Motor neuron (in vitro differentiated cells): ENCODE measurements at regions of chr1 and their contacts with region 1.

Region 1: GRCh38 chr1:174999216-174999925 is 376 bp upstream of the CACYBP start:
- ATAC-seq: peak; percentile 81 to 89 (median 84)
- H3K4me3 ChIP-seq: peak overlapping the region; percentile 58 to 78 (median 69)
- H3K27ac ChIP-seq: peak overlapping the region; percentile 99 to 100
- H3K4me1 ChIP-seq: peaks cover 10 to 17% of the 10 kb centered on the region in 2 donors

Region 2: DNA sequence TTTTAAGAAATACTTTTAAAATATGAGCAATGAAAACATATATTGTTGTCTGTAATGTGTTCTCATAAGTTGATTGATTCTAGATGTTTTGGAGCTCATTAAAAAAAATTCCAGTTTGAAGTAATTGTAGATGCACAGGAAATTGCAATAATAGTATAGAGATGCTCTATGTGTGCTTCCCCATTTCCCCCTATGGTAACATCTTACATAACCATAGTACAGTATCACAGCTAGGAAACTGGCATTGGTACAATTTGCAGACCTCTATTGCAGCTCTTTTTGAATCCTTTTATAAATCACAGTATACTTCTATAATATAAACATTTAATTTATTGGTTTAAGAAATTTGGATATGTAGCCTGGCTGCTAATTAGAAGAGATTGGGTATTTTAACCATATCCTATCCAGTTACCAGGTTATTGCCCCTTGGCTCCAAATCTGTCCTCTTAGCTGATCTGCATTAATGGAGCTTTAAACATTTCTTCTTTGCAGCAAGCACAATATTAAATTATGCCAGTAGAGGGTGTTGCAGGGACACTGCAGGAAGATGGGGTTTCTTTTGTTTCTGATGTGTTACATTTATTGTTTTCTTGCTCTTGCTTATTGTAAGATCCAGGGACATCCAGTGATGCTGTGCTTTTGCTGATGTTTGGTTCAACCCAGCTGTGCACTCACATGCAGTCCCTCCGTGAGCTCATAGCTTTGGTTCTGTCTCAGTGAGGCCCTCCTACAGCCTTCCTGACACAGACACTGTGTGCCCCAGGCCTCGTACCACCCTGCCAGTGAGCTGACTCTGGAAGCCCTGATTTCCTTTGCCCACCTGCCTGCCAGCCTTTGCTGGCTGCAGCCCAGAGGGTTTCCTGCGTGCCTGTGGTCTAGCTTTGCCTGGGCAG is 736.8 kb before region 1 on chr1:
- in situ Hi-C with region 1: loop called in 1 of 9 experiments (anchors 25 kb)
- ATAC-seq: peak; percentile 71 to 90 (median 76)
- H3K4me3 ChIP-seq: no peak overlapping the region
- H3K27ac ChIP-seq: no peak overlapping the region
- H3K4me1 ChIP-seq: peaks cover 0 to 2% of the 10 kb centered on the region in 2 donors

Region 3: GRCh38 chr1:174769961-174770549 is 229.3 kb before region 1 on chr1:
- in situ Hi-C with region 1: loop called in 7 of 9 experiments (anchors 25 kb)
- ATAC-seq: peak in 4 of 8 experiments; percentile 47 to 63 (median 50)
- H3K4me3 ChIP-seq: no peak overlapping the region
- H3K27ac ChIP-seq: no peak overlapping the region
- H3K4me1 ChIP-seq: no peaks in the 10 kb centered on the region

Region 4: DNA sequence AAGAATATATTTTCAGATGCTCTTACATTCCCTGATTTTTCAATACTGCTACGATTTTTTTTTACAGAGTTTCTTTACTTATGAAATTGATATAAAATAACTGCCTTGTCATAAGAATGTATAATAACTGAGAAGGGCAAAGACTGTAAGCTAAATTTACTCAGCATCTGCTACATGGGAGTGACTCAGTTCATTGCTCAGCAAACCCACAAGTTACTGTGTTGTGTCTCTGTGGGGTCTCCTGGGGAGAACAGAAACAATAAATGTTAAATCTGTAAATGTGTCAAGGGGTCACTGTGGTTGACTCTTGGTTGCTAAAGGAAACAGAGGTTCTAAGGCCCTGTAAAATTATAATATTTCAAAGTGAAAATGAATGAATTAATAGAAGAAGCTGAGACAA is 210.0 kb before region 1 on chr1:
- in situ Hi-C with region 1: loop called in 2 of 9 experiments (anchors 25 kb)
- ATAC-seq: peak in 2 of 8 experiments; percentile 66 to 68
- H3K4me3 ChIP-seq: no peak overlapping the region
- H3K27ac ChIP-seq: no peak overlapping the region
- H3K4me1 ChIP-seq: no peaks in the 10 kb centered on the region

Region 5: DNA sequence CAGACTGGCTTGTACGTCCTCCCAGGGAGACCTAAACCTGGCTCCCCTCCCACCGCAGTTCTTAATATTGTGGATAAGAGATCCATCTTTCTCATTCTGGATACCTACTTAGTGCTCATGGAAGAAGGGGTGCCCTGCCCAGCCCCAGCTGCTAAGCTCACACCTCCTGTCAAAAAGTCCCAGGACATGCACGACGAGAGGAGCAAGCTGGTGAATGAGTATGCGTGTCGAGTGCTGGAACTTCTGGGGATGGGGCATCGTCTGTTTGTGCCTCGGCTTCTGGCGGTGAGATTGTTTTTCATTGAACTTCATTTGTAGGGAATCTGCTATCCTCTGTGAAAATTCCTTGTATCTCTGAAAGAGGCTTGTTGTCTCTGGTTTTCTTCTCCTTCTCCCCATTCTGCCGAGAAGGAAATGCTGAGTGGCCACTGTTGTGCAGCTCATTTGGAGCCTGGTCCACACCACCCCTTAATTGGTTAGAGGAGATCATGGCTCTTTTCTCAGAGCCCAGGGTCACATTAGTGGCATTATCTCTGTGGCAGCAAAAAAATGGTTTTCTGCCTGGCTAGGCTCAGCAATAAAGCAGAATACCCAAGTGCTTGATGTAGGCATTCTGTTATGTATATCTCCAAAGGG is 199.0 kb before region 1 on chr1:
- in situ Hi-C with region 1: loop called in 3 of 9 experiments (anchors 25 kb)
- ATAC-seq: peak in 7 of 8 experiments; percentile 0 to 2 (median 0)
- H3K4me3 ChIP-seq: peak overlapping the region; percentile 46 to 60 (median 51)
- H3K27ac ChIP-seq: peak overlapping the region; percentile 84 to 85
- H3K4me1 ChIP-seq: peaks cover 3 to 22% of the 10 kb centered on the region in 2 donors

Region 6: GRCh38 chr1:174883409-174883808 is 116.0 kb before region 1 on chr1:
- in situ Hi-C with region 1: loop called in 1 of 9 experiments (anchors 25 kb)
- ATAC-seq: peak in 3 of 8 experiments; percentile 100
- H3K4me3 ChIP-seq: no peak overlapping the region
- H3K27ac ChIP-seq: no peak overlapping the region
- H3K4me1 ChIP-seq: no peaks in the 10 kb centered on the region

Region 7: DNA sequence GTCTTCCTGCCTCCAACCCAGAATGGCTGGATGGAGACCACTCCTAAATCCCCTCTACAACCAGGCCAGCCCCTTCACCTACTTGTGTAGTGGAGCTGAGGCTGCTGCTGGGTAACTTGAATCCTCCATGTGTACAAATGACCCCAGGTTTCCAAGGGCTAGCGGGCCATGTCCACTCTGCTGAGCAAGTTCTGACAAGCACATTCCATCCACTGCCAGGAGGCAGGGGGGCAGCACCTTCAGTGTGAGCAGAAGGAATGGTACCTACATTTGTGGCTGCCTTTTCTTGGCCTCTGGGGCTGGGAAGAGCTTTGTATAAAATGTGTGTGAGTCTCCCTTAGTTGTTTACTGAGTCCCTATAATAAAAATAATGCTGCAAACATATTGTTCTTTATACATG is 178.7 kb after region 1 on chr1:
- in situ Hi-C with region 1: no loop called
- ATAC-seq: peak in 1 of 8 experiments; percentile 39
- H3K4me3 ChIP-seq: no peak overlapping the region
- H3K27ac ChIP-seq: no peak overlapping the region
- H3K4me1 ChIP-seq: peaks cover 0 to 4% of the 10 kb centered on the region in 2 donors